ENCODE measurements at regions of chr12 and their contacts with region 1.

Region 1: DNA sequence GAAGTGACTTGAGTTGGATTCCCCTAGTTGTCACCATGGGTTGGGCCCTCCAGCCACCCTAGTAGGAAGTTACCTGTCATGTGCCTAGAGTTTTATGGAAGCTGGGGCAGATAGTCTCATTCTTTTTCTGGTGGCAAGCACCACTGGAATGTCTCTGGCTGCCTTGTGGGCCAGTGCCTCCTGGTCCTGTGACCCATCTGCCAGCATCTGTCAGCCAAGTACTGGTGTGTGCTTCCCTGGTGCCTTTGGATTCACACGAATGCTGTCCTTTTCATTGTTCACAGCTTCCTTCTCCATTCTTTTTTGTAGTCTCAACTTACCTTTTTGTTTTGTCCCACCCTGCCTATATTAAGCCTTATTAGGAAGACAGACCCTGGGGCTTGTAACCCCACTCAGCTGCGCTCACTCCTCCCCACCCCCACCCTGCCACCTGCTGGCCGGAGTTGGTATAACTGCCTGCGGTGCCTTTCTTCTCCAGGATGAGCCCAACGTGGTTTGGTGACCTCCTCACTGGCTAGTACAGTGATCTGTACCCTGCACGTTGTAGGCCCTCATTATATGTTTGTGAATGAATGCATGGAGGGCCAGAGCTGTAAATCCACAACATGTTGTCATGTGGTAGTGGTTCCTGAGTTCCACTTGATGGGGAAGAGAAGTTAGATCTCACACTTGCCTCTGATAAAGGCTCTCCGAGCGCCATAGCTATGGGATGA is 125.7 kb downstream of the TSPAN9 start:
- DNase-seq: no peak
- H3K4me3 ChIP-seq: no peak overlapping the region
- H3K27ac ChIP-seq: no peak overlapping the region
- H3K4me1 ChIP-seq: peaks cover 0 to 46% (median 30%) of the 10 kb centered on the region in 4 donors
- H3K27me3 ChIP-seq: peaks cover 0 to 16% (median 0%) of the 10 kb centered on the region in 3 donors
- CTCF ChIP-seq: peak; percentile 83 to 97 (median 88)
- EP300 ChIP-seq: no peak
- POLR2A ChIP-seq: no peak

Region 2: GRCh38 chr12:3073438-3074250 is 129.2 kb before region 1 on chr12:
- intact Hi-C with region 1: loop called (anchors 2 kb)
- DNase-seq: peak; percentile 89
- H3K4me3 ChIP-seq: no peak overlapping the region
- H3K27ac ChIP-seq: peak overlapping the region in 2 of 4 donors; percentile 15 to 41
- H3K4me1 ChIP-seq: peaks cover 0 to 42% (median 35%) of the 10 kb centered on the region in 4 donors
- H3K27me3 ChIP-seq: no peaks in the 10 kb centered on the region
- CTCF ChIP-seq: peak; percentile 78 to 96 (median 92)
- EP300 ChIP-seq: no peak
- POLR2A ChIP-seq: no peak

Region 3: GRCh38 chr12:3242199-3242863 is 39.4 kb after region 1 on chr12:
- intact Hi-C with region 1: no loop called
- DNase-seq: no peak
- H3K4me3 ChIP-seq: no peak overlapping the region
- H3K27ac ChIP-seq: no peak overlapping the region
- H3K4me1 ChIP-seq: peaks cover 0 to under 1% (median 0%) of the 10 kb centered on the region in 4 donors
- H3K27me3 ChIP-seq: no peaks in the 10 kb centered on the region
- CTCF ChIP-seq: no peak
- EP300 ChIP-seq: no peak
- POLR2A ChIP-seq: no peak

Region 4: DNA sequence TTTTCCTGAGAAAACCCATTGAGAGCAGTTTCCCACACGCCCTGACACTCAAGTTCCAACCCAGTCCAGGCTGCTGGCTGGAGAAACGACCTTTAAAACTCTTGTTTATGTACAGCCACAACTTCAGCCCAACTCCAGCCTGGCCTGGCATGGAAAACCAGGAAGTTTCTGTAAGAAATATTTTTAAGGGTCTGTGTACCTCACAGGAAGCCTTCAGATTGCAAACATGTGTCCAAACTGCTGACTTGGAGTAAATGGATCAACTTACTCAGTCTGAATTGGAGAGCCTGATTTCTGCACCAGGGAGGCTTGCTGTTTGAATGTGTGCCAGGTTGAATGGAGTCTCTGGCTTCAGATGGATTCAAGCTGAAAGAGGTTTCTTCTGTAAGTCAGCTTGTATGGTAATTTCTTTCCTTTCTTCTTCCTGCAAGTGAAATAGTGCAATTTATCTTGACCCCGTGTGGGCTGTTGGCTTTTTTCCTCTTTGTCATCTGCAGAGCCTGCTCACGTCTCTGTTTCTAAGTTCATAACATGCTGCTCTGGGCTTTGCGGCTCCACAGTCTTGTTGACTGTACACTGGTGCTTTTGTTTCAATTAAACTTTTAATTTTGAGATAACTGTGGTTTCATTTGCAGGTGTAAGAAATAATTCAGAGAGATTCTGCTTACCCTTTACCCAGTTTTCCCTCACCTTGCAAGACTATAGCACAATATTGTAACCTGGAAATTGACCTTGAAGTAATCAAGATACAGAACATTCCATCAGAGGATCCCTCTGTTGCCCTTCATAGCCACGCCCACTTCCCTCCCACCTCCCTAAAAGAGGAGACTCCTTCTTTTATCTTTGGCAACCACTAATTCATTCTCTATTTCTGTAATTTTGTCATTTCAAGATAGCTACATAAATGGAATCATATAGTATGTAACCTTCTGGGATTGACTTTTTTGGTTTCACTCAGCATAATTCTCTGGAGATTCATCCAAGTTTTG is 178.5 kb after region 1 on chr12:
- intact Hi-C with region 1: no loop called
- DNase-seq: peak; percentile 73
- H3K4me3 ChIP-seq: no peak overlapping the region
- H3K27ac ChIP-seq: no peak overlapping the region
- H3K4me1 ChIP-seq: peaks cover 0 to 9% (median 7%) of the 10 kb centered on the region in 4 donors
- H3K27me3 ChIP-seq: no peaks in the 10 kb centered on the region
- CTCF ChIP-seq: no peak
- EP300 ChIP-seq: no peak
- POLR2A ChIP-seq: no peak